ENCODE measurements at regions of chr6 and their contacts with region 1.

Region 1: DNA sequence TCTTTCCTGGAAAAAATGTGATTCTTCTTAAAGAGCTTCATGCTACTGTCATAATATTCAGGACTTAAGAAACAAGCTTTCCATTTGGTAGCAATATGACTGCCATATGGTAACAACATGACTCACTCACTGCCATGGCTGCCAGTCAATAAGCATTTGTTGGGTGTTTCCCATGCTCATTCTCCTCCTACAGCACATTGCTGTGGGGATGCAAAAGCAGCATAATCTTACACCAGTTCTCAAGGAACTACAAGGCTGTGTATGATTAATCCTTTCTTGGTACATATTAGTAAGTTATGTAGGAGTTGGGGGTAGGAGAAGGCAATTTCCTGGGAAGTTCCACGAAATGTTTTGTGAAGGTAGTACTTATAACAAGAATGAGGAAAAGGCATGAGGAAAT is 76.7 kb downstream of the CEP162 start:
- DNase-seq: no peak

Region 2: GRCh38 chr6:84017709-84018452 is 132.8 kb before region 1 on chr6:
- intact Hi-C with region 1: no loop called
- DNase-seq: no peak

Region 3: DNA sequence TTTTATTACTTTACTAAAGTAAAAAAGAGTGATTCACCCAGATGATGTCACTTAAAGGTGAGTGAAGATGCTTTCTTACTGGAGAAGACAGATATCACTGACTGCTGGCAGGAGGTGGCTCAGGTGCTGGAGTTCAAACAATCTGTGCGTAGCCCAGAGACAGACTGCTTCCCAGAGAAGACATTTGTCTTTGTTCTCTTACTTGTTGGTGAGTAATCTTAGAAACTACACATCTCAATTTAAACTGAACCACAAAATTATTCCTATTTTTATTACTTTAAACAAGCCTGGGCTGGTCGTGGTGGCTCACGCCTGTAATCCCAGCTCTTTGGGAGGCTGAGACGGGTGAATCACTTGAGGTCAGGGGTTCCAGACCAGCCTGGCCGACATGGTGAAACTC is 15.4 kb before region 1 on chr6:
- intact Hi-C with region 1: loop called (anchors 1 kb)
- DNase-seq: no peak